Prostate gland (tissue), 2 donors: ENCODE measurements at regions of chr19 and their contacts with region 1.

Region 1: GRCh38 chr19:21604351-21604926 is 99.0 kb downstream of the ZNF429 start:
- DNase-seq: no peak
- H3K4me3 ChIP-seq: peak overlapping the region; percentile 18 to 31
- H3K27ac ChIP-seq: peak overlapping the region; percentile 64 to 70
- H3K4me1 ChIP-seq: no peaks in the 10 kb centered on the region
- H3K27me3 ChIP-seq: no peaks in the 10 kb centered on the region
- CTCF ChIP-seq: no peak
- POLR2A ChIP-seq: no peak

Region 2: GRCh38 chr19:21505459-21506451 is 98.7 kb before region 1 on chr19 and contains the start of gene ZNF429:
- intact Hi-C with region 1: loop called (anchors 10 kb)
- DNase-seq: peak; percentile 93
- H3K4me3 ChIP-seq: peak within 1 kb of the TSS; percentile 62 to 83
- H3K27ac ChIP-seq: peak within 1 kb of the TSS; percentile 91 to 95
- H3K4me1 ChIP-seq: no peaks in the 10 kb centered on the region
- H3K27me3 ChIP-seq: no peaks in the 10 kb centered on the region
- CTCF ChIP-seq: no peak
- POLR2A ChIP-seq: peak; percentile 63
- total RNA-seq, gene ZNF429: 22.7 TPM